Right cardiac atrium (tissue), 5 donors: ENCODE measurements at regions of chr11 and their contacts with region 1.

Region 1: GRCh38 chr11:76207642-76208401 is 1.5 kb upstream of the WNT11 start:
- DNase-seq: peak; percentile 84 to 94 (median 93)
- ATAC-seq: peak; percentile 78 to 80
- H3K4me3 ChIP-seq: peak overlapping the region; percentile 50
- H3K27ac ChIP-seq: no peak overlapping the region
- H3K4me1 ChIP-seq: peaks cover 8% of the 10 kb centered on the region
- H3K27me3 ChIP-seq: no peaks in the 10 kb centered on the region

Region 2: DNA sequence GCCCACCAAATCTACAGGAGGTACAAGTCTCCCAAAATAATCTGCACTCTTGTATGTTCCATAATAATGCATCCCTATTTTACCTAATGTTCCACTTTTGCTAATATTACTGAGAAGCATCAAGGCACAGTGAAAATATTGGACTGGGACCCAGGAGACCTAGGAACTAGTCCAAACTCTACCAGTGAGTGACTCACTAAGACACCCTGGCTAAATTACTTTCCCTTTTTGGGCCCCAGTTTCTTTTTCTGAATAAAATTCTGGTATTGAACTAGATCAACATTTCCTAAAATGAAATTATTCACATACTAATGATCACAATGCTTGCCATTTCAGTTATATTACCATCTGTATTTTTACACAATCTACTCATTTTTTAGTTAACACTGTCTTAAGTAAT is 153.6 kb after region 1 on chr11:
- intact Hi-C with region 1: no loop called
- DNase-seq: no peak
- ATAC-seq: no peak
- H3K4me3 ChIP-seq: no peak overlapping the region
- H3K27ac ChIP-seq: no peak overlapping the region
- H3K4me1 ChIP-seq: no peaks in the 10 kb centered on the region
- H3K27me3 ChIP-seq: no peaks in the 10 kb centered on the region

Region 3: GRCh38 chr11:76444384-76445123 is 236.7 kb after region 1 on chr11 and contains the start of gene EMSY:
- intact Hi-C with region 1: loop called in 1 of 4 experiments (anchors 5 kb)
- DNase-seq: peak; percentile 97 to 98 (median 98)
- ATAC-seq: peak; percentile 97 to 98
- H3K4me3 ChIP-seq: peak within 1 kb of the TSS; percentile 91
- H3K27ac ChIP-seq: peak within 1 kb of the TSS; percentile 94
- H3K4me1 ChIP-seq: no peaks in the 10 kb centered on the region
- H3K27me3 ChIP-seq: no peaks in the 10 kb centered on the region
- total RNA-seq, gene EMSY: 19.1 to 22.7 (median 20.6) TPM